ENCODE measurements at regions of chr1 and their contacts with region 1.

Region 1: DNA sequence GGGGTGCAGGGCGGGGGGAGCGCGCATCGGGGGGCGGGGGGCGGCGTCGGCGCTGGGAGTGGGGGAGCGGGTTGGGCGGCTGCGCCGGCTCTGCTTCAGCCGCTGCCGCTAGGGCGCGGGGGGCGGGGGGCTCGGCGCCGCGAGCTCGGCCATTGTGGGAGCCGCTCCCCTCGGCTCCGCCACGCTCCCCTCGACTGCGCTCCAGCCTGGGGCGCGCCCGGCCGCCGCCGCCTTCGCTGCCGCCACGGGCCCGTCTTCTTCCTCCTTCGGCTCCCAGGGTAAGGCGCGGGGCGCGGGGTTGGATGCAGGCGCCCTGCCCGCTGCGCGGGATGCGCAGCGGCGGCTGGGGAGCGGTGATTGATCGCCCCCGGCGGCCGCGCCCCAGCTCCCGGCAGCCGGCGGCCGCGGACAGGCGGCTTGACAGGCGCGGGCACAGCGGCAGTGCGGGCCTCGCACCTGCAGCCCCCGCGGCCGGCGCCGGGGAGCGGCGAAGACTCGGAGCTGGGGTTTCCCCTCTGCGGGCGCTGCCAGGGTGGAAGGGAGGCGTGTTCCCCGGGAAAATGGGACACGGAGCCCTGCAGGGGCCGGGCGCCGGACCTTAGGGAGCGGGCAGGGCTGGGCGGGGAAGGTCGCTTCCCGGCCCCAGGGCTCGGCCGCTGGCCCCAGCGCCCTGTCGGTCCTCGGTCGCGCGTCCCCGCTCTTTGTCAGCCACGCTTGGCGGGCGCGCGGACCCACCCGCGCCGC is 55.3 kb downstream of the NDUFS5 start:
- DNase-seq: no peak
- H3K4me3 ChIP-seq: peak overlapping the region; percentile 52 to 76
- H3K27ac ChIP-seq: peak overlapping the region; percentile 66
- H3K4me1 ChIP-seq: peaks cover 26% of the 10 kb centered on the region
- H3K27me3 ChIP-seq: no peaks in the 10 kb centered on the region
- CTCF ChIP-seq: no peak
- POLR2A ChIP-seq: no peak

Region 2: GRCh38 chr1:39026051-39026865 is 55.2 kb before region 1 on chr1 and contains the start of gene NDUFS5:
- intact Hi-C with region 1: loop called (anchors 10 kb)
- DNase-seq: peak in 1 of 2 donors; percentile 93
- H3K4me3 ChIP-seq: peak within 1 kb of the TSS; percentile 61 to 63
- H3K27ac ChIP-seq: peak within 1 kb of the TSS; percentile 85
- H3K4me1 ChIP-seq: peaks cover 13% of the 10 kb centered on the region
- H3K27me3 ChIP-seq: no peaks in the 10 kb centered on the region
- CTCF ChIP-seq: no peak
- POLR2A ChIP-seq: peak in 1 of 2 donors; percentile 87
- total RNA-seq, gene NDUFS5: 534 TPM

Measured in vagina (tissue), 2 donors.